ENCODE measurements at regions of chr7 and their contacts with region 1.

Region 1: GRCh38 chr7:36723951-36724664 is at the start of gene AOAH:
- DNase-seq: peak; percentile 57 to 94 (median 86)
- ATAC-seq: peak; percentile 92 to 94
- H3K4me3 Mint-ChIP-seq: peak within 1 kb of the TSS; percentile 86 to 99 (median 92)
- H3K27ac Mint-ChIP-seq: peak within 1 kb of the TSS; percentile 85 to 98 (median 97)
- H3K4me1 Mint-ChIP-seq: peaks cover 49 to 90% (median 88%) of the 10 kb centered on the region in 4 donors
- H3K27me3 Mint-ChIP-seq: no peaks in the 10 kb centered on the region
- polyA plus RNA-seq, gene AOAH: 40.5 to 85.9 (median 44.3) TPM

Region 2: DNA sequence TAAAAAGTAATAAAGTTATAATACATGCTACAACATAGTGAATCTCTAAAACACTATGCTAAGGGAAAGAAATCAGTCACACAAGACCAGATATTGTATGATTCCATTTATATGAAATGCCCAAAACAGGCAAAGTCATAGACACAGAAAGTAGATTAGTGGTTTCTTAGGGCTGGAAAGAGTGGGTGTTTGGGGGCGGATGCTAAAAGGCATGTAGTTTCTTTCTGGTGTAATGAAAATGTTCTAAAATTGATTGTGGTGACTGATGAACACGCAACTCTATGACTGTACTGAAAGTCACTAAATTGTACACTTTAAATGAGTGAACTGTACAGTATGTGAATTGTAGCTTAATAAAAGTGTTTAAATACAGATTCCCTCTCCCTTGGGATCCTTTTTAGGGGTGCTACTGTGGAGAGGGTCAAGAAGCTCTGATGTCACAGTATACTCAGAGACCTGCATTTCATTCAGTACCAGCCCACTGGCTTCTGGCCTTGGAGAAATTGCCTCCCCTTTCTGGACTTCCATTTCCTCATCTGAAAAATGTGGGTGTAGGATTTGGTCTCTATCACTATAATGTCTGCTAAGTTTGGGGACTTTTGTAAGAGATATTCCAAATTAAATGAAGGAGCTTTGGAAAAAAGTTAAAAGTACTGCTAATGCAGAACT is 46.2 kb before region 1 on chr7:
- POLR2A ChIA-PET with region 1: interaction called, 18 read pairs
- DNase-seq: peak in 3 of 10 donors; percentile 23 to 42 (median 41)
- ATAC-seq: peak; percentile 16 to 52
- H3K4me3 Mint-ChIP-seq: peak overlapping the region; percentile 3 to 84 (median 66)
- H3K27ac Mint-ChIP-seq: peak overlapping the region; percentile 87 to 95 (median 94)
- H3K4me1 Mint-ChIP-seq: peaks cover 35 to 57% (median 46%) of the 10 kb centered on the region in 4 donors
- H3K27me3 Mint-ChIP-seq: no peaks in the 10 kb centered on the region

Region 3: GRCh38 chr7:36736899-36737211 is 12.7 kb after region 1 on chr7:
- POLR2A ChIA-PET with region 1: interaction called, 34 read pairs
- DNase-seq: peak in 2 of 10 donors; percentile 27 to 36
- ATAC-seq: peak; percentile 73 to 83
- H3K4me3 Mint-ChIP-seq: peak overlapping the region; percentile 69 to 87 (median 84)
- H3K27ac Mint-ChIP-seq: peak overlapping the region; percentile 88 to 98 (median 96)
- H3K4me1 Mint-ChIP-seq: peaks cover 22 to 52% (median 44%) of the 10 kb centered on the region in 4 donors
- H3K27me3 Mint-ChIP-seq: no peaks in the 10 kb centered on the region

Region 4: DNA sequence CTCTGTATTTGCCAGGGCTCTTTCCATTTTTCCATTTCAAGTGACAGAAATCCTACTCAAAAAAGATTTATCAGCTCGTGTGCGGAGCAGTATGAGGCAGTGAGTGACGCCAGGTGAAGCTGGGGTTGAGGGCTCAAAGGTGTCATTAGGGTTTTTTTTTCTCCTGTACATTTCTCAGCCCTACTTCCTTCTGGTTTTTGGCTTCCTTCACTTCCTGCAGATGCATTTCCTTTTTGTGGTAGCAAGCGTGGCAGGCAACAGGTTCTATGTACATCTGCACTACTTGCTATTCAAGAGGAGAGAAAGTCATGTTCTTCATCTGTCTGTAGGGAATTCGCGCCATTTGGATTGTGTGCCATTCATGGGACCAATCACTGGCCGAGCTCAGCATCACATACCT is 53.0 kb after region 1 on chr7:
- POLR2A ChIA-PET with region 1: interaction called, 41 read pairs
- DNase-seq: peak; percentile 12 to 90 (median 70)
- ATAC-seq: peak; percentile 74 to 80
- H3K4me3 Mint-ChIP-seq: peak overlapping the region; percentile 79 to 92 (median 84)
- H3K27ac Mint-ChIP-seq: peak overlapping the region; percentile 71 to 99 (median 97)
- H3K4me1 Mint-ChIP-seq: peaks cover 53 to 88% (median 86%) of the 10 kb centered on the region in 4 donors
- H3K27me3 Mint-ChIP-seq: no peaks in the 10 kb centered on the region